Activated naive CD4-positive, alpha-beta T cell treated with anti-CD3 and anti-CD28 coated beads for 36 hours (primary cell): ENCODE measurements at regions of chr19 and their contacts with region 1.

Region 1: GRCh38 chr19:35757749-35758608 is at the start of gene PROSER3:
- DNase-seq: peak; percentile 99
- H3K4me3 Mint-ChIP-seq: peak within 1 kb of the TSS; percentile 90
- H3K27ac Mint-ChIP-seq: peak within 1 kb of the TSS; percentile 92
- H3K4me1 Mint-ChIP-seq: peaks cover 20% of the 10 kb centered on the region
- H3K27me3 Mint-ChIP-seq: peaks cover 8% of the 10 kb centered on the region
- total RNA-seq, gene PROSER3: 45.3 to 47.4 TPM

Region 2: GRCh38 chr19:35740423-35741202 is 17.4 kb before region 1 on chr19:
- CTCF ChIA-PET with region 1: interaction called, 5 read pairs
- intact Hi-C with region 1: loop called (anchors 1 kb)
- DNase-seq: peak; percentile 99
- H3K4me3 Mint-ChIP-seq: peak overlapping the region; percentile 89
- H3K27ac Mint-ChIP-seq: peak overlapping the region; percentile 97
- H3K4me1 Mint-ChIP-seq: peaks cover 41% of the 10 kb centered on the region
- H3K27me3 Mint-ChIP-seq: no peaks in the 10 kb centered on the region